A673 (cell line): ENCODE measurements at regions of chr17 and their contacts with region 1.

Region 1: DNA sequence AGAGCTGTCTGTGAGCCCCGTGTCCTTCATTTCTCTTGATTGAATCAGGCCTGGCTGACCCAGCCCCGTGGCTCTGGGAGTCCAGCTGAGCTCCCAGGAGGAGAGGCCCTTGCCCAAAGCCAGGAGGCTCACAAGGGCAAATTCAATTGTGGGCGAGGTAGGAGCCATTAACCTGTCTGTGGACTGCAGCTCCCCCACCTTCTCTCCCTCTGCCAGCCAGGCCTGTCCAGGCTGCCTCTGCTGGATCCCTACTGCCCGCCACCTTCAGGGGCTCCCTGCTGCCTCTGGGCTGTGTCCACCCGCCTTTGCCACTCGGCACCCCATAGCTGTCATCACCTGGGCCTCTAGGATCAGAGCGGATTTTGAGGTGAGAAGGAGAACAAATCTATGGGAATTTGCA is 61.9 kb downstream of the RTN4RL1 start:
- DNase-seq: no peak
- H3K4me3 ChIP-seq: no peak overlapping the region
- H3K27ac ChIP-seq: no peak overlapping the region
- H3K4me1 ChIP-seq: peaks cover 11% of the 10 kb centered on the region
- H3K27me3 ChIP-seq: no peaks in the 10 kb centered on the region
- CTCF ChIP-seq: no peak

Region 2: DNA sequence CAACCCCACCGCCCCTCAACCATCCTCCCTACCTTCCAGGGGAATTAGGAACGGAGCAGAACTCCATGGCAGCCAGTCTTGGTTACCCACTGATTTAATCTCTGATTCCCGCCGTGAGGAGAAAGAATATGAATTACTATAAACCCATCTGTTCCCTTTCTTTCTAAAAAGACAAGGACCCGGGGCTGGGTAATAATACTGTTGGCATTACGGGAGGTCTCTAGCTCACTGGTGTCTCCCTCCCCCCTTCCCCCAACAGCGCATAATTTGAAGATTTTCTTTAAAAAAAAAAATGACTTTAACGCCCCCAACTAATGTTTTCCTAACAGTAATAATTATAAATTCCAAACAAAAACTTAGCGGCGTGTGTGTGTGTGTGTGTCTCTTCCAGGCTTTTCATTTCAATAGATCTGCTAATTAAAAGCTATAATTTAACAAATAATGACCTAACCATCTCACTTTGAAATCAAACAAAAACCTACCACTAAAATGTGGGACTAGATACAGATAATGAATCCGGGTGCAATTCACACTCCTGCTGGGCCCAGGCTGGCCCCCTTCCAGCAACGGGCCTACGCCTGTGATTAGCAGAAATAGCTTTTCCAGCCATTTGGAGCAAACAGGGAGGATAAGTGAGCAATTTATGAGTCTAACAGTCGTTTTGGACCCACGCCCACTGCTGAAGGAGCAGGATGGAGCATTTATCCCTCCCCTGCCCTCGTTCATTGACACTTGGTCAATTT is 711.2 kb before region 1 on chr17:
- CTCF ChIA-PET with region 1: interaction called, 10 read pairs
- POLR2A ChIA-PET with region 1: no interaction called
- intact Hi-C with region 1: no loop called
- DNase-seq: peak; percentile 93
- H3K4me3 ChIP-seq: peak overlapping the region; percentile 2
- H3K27ac ChIP-seq: peak overlapping the region; percentile 45
- H3K4me1 ChIP-seq: peaks cover 16% of the 10 kb centered on the region
- H3K27me3 ChIP-seq: no peaks in the 10 kb centered on the region
- CTCF ChIP-seq: no peak

Region 3: DNA sequence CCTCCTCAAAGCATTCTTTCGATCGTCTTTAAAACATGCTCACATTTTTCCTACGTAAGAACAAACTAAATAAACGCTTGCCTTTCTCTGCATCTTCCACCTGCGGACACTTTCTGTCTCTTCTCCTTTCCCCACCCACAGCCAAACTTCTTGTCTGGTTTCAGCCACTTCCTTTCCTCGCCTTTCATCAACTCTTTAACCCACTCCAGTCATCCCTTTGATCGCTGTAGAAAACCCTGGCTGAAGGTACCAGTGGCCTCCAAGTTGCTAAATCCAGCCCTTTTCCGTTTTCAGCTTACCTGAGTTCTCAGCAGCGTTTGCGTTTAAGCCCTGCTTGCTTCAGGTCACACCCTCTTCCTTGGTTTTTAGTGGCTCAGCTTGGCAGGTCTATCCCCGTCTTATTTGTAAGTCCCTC is 132.9 kb before region 1 on chr17:
- CTCF ChIA-PET with region 1: no interaction called
- POLR2A ChIA-PET with region 1: no interaction called
- intact Hi-C with region 1: no loop called
- DNase-seq: peak; percentile 25
- H3K4me3 ChIP-seq: peak overlapping the region; percentile 93
- H3K27ac ChIP-seq: peak overlapping the region; percentile 78
- H3K4me1 ChIP-seq: peaks cover 4% of the 10 kb centered on the region
- H3K27me3 ChIP-seq: no peaks in the 10 kb centered on the region
- CTCF ChIP-seq: no peak